ENCODE measurements at regions of chr15 and their contacts with region 1.

Region 1: GRCh38 chr15:79896637-79897379 is at the start of gene MTHFS:
- DNase-seq: peak; percentile 30 to 65
- ATAC-seq: peak; percentile 87 to 89
- H3K4me3 ChIP-seq: peak within 1 kb of the TSS; percentile 71 to 94 (median 84)
- H3K27ac ChIP-seq: peak within 1 kb of the TSS; percentile 85 to 92 (median 90)
- H3K4me1 ChIP-seq: peaks cover 5 to 10% of the 10 kb centered on the region in 2 donors
- H3K27me3 ChIP-seq: no peaks in the 10 kb centered on the region
- CTCF ChIP-seq: peak in 2 of 5 experiments; percentile 42 to 66
- POLR2A ChIP-seq: peak; percentile 40 to 66
- total RNA-seq, gene MTHFS: 7.0 to 16.7 (median 14.6) TPM

Region 2: GRCh38 chr15:79724312-79724711 is 172.5 kb before region 1 on chr15:
- in situ Hi-C with region 1: no loop called
- intact Hi-C with region 1: no loop called
- DNase-seq: no peak
- ATAC-seq: no peak
- H3K4me3 ChIP-seq: no peak overlapping the region
- H3K27ac ChIP-seq: no peak overlapping the region
- H3K4me1 ChIP-seq: no peaks in the 10 kb centered on the region
- H3K27me3 ChIP-seq: no peaks in the 10 kb centered on the region
- CTCF ChIP-seq: no peak
- POLR2A ChIP-seq: no peak

Region 3: DNA sequence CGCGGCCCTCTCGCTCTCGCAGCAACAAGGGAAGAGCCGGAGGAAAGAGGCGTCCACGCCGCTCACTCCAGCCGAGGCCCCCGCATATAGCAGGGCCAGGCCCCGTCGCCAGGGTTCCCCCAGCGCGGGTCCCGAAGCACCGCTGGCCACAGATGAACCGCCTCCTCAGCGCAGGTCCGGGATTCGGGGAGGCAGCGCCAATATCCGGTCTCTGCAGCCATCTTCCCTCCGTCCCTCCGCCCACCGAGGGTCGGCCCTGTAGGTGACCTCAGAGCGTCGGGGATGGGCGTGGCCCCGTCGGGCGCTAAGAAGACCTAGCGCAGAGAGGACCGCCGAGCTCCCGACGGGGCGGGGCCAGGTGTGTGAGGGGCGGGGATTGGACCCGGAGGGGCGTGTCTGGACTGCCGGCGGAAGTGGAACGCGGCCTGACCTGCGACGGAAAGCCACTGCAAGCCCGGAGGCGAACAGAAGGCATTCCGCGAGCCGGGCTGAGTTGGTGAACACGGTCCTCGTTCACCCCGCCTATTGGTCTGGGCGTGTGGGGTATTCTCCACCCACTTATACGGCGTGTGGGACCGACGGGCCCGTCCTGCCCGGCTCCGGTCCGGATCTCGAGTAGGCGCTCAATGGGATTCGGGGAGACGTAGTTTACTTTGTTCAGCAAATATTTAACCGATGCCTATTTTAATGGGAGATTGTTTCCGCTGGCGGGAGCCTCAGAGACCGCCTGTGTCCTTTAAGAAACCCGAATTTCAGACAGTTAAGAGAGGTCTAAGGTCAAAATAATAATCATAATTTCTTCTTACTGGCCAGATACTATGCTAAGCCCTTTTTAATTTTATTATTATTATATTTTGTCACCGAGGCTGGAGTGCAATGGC is 26.9 kb after region 1 on chr15:
- in situ Hi-C with region 1: no loop called
- intact Hi-C with region 1: loop called (anchors 2 kb)
- DNase-seq: peak; percentile 69 to 90
- ATAC-seq: peak; percentile 85 to 90
- H3K4me3 ChIP-seq: peak overlapping the region; percentile 84 to 91 (median 86)
- H3K27ac ChIP-seq: peak overlapping the region; percentile 83 to 86 (median 86)
- H3K4me1 ChIP-seq: peaks cover 5 to 10% of the 10 kb centered on the region in 2 donors
- H3K27me3 ChIP-seq: peaks cover 0 to 7% (median 5%) of the 10 kb centered on the region in 3 donors
- CTCF ChIP-seq: no peak
- POLR2A ChIP-seq: peak; percentile 70 to 75

Region 4: GRCh38 chr15:79989682-79990081 is 92.9 kb after region 1 on chr15:
- in situ Hi-C with region 1: loop called in 1 of 4 experiments (anchors 10 kb)
- intact Hi-C with region 1: loop called (anchors 1 kb)
- DNase-seq: no peak
- ATAC-seq: no peak
- H3K4me3 ChIP-seq: no peak overlapping the region
- H3K27ac ChIP-seq: no peak overlapping the region
- H3K4me1 ChIP-seq: peaks cover 0 to 2% of the 10 kb centered on the region in 2 donors
- H3K27me3 ChIP-seq: no peaks in the 10 kb centered on the region
- CTCF ChIP-seq: no peak
- POLR2A ChIP-seq: no peak

Region 5: DNA sequence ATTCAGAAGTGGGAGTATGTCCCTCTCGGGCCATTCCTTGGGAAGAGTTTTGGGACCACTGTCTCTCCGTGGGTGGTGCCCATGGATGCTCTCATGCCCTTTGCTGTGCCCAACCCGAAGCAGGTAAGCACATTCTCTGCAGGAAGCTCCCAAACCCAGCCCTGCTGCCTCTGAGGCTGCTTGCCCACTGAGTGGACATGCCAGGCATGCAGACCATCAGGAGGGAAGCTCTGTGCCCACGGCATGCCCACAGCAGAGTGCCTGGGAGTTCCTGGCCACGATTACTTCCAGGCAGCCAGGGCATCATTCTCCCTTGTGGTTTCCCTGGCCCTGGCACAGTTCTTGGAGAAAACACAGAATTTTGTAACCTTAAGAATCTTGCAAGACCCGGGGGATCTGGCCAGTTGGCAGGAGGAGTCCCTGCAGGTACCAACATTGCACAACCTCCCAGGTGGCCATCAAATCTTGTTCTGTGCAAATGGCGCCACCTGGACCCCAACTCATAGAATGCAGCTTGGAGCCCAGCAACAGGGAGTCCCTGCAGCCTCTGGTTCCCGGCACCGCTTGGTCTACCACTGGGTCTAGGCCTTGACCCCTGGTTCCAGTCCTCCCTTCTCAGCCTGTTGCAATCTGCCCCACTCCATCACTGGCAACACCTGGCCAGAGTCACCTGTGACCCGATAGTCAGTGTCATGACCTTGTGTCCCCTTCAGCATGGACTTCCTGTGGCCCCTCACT is 276.4 kb after region 1 on chr15:
- in situ Hi-C with region 1: loop called in 3 of 4 experiments (anchors 10 to 25 kb)
- intact Hi-C with region 1: loop called (anchors 1 kb)
- DNase-seq: peak; percentile 67 to 87
- ATAC-seq: peak; percentile 57 to 59
- H3K4me3 ChIP-seq: no peak overlapping the region
- H3K27ac ChIP-seq: peak overlapping the region; percentile 79 to 95 (median 92)
- H3K4me1 ChIP-seq: peaks cover 23 to 25% of the 10 kb centered on the region in 2 donors
- H3K27me3 ChIP-seq: no peaks in the 10 kb centered on the region
- CTCF ChIP-seq: peak; percentile 69 to 84 (median 78)
- POLR2A ChIP-seq: no peak